ENCODE measurements at regions of chr9 and their contacts with region 1.

Region 1: GRCh38 chr9:34603610-34604231 is 8.2 kb downstream of the RPP25L start:
- DNase-seq: peak; percentile 87
- ATAC-seq: peak; percentile 95
- H3K4me3 Mint-ChIP-seq: no peak overlapping the region
- H3K27ac Mint-ChIP-seq: no peak overlapping the region
- H3K4me1 Mint-ChIP-seq: no peaks in the 10 kb centered on the region
- H3K27me3 Mint-ChIP-seq: peaks cover 2% of the 10 kb centered on the region

Region 2: DNA sequence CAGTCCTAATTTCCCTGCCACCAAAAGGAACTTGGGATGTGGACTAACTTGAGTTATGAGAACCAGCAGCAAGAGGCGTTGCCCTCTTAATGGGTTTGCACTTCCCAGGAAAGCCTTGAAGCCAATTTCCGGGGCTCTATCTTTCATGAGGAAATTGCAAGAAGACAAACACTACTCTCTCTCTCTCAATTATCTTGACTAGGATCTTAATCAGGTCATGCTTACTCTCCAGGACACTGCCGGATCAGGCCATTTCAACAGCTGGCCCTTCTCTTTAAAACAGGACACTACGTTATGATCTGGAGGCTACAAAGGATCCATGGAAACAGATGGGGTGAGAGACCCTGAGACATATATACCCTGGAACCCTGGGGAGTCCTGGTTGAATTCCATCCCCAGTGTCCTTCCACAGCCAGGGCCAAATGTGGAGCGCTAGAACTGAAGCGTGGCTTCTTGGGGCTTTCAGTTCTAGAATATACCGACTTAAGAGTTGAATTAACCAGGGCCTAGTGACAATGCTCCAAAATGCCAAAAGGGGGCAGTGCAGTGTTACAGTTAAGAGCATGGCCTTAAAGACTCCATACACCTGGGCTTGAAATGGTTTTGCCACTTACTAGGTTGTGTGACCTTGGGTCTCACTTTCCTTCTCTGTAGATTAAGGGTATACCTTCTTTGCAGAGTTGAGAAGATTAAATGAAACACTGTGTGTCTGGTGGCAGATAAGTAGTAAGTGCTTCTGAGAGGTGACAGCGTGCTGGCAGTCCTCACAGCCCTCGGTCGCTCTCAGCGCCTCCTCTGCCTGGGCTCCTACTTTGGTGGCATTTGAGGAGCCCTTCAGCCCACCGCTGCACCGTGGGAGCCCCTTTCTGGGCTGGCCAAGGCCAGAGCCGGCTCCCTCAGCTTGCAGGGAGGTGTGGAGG is 166.5 kb before region 1 on chr9:
- CTCF ChIA-PET with region 1: interaction called, 4 read pairs
- POLR2A ChIA-PET with region 1: no interaction called
- intact Hi-C with region 1: loop called in 1 of 2 experiments (anchors 1 kb)
- DNase-seq: peak; percentile 77
- ATAC-seq: peak; percentile 96
- H3K4me3 Mint-ChIP-seq: no peak overlapping the region
- H3K27ac Mint-ChIP-seq: no peak overlapping the region
- H3K4me1 Mint-ChIP-seq: peaks cover 9% of the 10 kb centered on the region
- H3K27me3 Mint-ChIP-seq: no peaks in the 10 kb centered on the region

Region 3: DNA sequence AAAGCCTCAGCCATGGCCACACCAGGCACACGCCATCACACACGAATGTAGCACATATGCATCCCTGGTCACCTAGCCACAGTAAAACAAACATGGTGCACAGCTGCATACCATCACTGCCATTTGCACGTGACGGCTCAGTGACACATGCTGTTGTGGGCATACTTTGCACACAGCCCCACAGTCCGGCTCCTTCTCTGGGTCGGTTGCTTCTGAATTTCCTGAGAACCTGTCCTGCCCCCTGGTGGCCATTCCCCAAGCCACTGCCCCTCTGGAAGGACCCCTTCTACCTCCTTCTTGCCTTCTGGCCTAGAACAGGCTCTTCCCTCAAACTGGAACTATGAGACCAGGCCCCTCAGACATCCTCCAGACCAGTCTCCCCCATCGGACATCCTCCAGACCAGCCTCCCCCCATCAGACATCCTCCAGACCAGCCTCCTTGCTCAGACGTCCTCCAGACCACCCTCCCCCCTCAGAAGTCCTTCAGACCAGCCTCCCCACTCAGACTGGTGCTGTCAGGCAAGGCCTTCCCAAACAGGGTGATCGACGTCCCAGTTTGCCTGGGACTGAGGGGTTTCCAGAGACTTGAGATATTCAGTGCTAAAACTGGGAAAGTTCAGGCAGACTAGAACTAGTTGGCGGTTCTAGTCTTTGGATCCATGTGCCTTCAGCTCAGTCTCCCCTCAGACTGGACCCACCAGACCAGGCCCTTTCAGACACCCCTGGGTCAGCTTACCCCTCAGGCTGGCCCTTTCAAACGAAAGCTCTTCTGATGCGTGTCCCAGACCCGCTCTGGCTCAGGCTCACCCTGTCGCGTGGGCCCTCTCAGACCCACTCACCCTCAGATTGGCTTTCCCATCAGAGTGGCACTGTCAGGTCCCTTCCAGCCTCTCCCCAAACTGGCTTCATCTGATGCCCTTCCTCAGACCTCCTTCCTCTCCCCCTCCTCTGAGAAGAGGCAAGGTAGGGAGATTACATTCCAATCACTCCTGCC is 56.6 kb before region 1 on chr9:
- CTCF ChIA-PET with region 1: interaction called, 4 read pairs
- POLR2A ChIA-PET with region 1: no interaction called
- intact Hi-C with region 1: loop called in 1 of 2 experiments (anchors 1 kb)
- DNase-seq: peak; percentile 84
- ATAC-seq: peak; percentile 84
- H3K4me3 Mint-ChIP-seq: no peak overlapping the region
- H3K27ac Mint-ChIP-seq: no peak overlapping the region
- H3K4me1 Mint-ChIP-seq: no peaks in the 10 kb centered on the region
- H3K27me3 Mint-ChIP-seq: peaks cover 7% of the 10 kb centered on the region

Region 4: DNA sequence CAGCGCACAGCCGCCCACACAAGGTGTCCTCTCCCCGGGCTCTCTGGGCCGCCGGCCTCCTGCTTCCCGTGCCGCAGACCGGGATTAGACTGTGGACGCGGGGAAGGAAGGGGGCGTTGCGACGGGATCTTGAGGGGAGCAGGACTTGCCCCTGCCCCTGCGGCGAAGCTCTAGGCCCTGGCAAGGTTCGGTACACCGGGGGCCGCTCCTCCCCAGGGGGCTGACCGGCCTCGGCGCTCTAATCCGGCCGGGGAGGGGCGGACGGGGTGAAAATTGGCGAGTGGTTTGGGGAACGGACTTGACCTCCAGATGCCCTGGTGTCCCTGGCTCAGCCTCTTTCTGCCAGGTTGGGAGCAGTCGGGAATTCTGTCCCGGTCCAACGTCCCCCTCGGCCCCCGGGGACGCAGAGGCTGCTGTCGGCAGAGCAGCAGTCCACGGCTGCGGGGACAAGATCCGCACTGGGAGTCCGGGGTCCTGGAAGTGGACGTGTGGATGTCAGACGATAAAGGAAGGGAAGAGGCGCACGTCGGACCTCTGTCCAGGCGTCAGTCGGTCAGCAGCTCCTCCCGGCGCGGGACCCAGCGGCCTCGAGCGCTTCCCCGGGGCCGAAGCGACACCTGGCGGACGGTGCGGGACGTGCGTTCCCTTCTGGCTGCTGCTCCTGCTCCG is 12.3 kb before region 1 on chr9:
- CTCF ChIA-PET with region 1: interaction called, 7 read pairs
- POLR2A ChIA-PET with region 1: no interaction called
- intact Hi-C with region 1: loop called in 1 of 2 experiments (anchors 2 kb)
- DNase-seq: peak; percentile 89
- ATAC-seq: peak; percentile 76
- H3K4me3 Mint-ChIP-seq: peak overlapping the region; percentile 57
- H3K27ac Mint-ChIP-seq: no peak overlapping the region
- H3K4me1 Mint-ChIP-seq: peaks cover 27% of the 10 kb centered on the region
- H3K27me3 Mint-ChIP-seq: peaks cover 66% of the 10 kb centered on the region

Region 5: GRCh38 chr9:34646211-34647083 is 42.7 kb after region 1 on chr9 and contains the start of gene GALT:
- CTCF ChIA-PET with region 1: interaction called, 10 read pairs
- POLR2A ChIA-PET with region 1: no interaction called
- intact Hi-C with region 1: no loop called
- DNase-seq: peak; percentile 99
- ATAC-seq: peak; percentile 90
- H3K4me3 Mint-ChIP-seq: peak within 1 kb of the TSS; percentile 91
- H3K27ac Mint-ChIP-seq: peak within 1 kb of the TSS; percentile 89
- H3K4me1 Mint-ChIP-seq: peaks cover 26% of the 10 kb centered on the region
- H3K27me3 Mint-ChIP-seq: no peaks in the 10 kb centered on the region
- total RNA-seq, gene GALT: 45.1 to 53.9 TPM

Measured in activated CD4-positive, alpha-beta T cell treated with anti-CD3 and anti-CD28 coated beads for 36 hours (primary cell).